Left colon (tissue), 2 donors: ENCODE measurements at regions of chr1 and their contacts with region 1.

Region 1: DNA sequence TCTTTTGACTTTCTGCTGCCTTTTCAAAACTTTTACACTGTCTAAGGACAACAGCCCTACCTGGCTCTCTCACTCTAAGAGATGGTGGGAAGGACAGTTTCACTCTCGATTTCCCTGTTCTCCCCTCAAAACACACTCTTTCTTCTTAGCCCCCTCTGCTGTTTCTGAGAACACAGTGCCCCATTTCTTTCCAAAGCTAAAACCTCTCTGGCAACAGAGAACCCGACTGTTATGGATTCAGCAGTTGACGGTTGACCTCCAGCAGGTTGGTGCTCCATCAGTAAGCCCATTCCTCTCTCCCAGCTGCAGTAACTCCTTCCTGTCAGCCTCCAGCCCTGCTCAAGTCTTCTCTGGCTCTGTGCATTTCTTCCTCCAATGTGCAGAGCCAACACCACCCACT is 88.2 kb upstream of the ABCD3 start:
- DNase-seq: no peak
- ATAC-seq: no peak

Region 2: DNA sequence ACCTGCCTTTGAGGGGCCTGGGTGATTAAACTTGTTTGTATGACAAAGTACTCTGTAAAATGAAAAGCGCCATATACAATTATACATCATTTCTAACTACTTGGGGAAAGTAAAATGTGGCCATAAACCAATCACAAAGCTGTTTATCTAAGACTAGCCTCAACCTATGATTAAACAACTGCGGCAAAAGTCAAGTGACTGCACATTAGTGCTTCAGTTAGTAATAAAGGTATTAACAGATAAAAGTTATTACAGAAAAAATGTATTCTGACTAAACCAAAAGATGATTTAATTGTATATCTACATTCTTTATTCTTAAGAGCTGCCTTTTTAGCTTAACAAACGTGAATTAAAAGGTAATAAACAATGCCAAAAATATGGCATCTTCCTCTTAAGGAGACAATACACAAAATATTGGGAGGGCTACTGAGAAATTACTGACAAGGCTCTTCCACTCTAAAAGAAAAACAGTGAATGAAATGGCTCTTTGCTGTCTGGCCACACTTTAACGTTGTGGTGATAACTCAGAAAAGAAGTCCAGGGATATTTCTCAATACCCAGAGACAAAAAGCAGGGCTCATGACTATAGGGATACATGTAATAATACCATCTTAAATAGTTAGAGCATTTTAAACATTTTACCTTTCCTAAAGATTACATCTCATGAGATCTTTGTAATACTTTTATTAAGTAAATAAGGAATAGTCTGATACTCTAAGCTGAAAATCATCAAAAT is 101.2 kb before region 1 on chr1:
- intact Hi-C with region 1: no loop called
- DNase-seq: no peak
- ATAC-seq: no peak

Region 3: DNA sequence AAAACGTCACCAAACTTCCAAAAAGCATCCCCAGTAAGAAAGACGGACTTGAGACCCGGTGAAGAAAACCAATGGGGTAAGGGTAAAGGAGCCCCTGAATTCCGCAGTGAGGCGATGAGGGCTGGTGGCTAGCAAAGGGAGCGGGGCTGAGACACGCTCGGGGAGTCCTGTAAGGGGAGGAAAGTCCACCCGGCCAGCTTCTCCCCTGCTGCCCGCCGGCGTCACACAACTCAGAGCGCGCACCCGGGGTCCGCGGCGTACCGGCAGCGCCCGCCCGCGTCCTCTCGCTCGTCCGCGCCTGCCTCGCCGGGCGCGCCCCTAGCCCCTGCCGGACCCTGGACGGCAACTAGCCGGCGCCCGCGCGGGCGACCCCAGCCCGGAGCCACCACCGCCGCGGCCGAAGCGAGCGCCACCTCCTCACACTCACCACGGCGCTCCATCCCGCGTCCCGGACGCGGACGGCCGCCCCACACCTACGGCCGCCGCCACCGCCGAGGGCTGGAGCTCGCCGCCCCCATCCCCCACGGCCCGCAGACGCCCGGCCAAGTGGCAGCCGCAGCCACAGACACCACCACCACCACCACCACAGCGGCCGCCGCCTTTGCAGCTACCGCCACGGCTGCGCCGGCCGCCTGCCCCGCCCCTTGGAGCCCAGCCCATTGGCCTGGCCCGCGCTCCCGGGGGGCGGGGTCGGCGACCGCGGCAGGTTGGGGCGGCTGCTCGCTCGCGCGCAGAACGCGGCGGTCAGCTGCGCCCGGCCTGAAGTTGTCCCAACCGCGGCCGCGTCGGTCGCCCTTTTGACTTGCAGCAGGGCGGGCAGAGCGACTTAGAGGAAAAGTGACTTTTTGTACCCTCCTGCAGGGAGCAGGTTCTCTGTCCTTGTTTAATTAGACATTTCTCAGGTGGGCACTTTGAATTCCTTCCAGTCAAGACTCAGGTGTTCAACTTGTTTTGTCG is 82.6 kb before region 1 on chr1:
- intact Hi-C with region 1: loop called in 1 of 2 experiments (anchors 10 kb)
- DNase-seq: peak; percentile 62 to 85
- ATAC-seq: peak; percentile 100

Region 4: DNA sequence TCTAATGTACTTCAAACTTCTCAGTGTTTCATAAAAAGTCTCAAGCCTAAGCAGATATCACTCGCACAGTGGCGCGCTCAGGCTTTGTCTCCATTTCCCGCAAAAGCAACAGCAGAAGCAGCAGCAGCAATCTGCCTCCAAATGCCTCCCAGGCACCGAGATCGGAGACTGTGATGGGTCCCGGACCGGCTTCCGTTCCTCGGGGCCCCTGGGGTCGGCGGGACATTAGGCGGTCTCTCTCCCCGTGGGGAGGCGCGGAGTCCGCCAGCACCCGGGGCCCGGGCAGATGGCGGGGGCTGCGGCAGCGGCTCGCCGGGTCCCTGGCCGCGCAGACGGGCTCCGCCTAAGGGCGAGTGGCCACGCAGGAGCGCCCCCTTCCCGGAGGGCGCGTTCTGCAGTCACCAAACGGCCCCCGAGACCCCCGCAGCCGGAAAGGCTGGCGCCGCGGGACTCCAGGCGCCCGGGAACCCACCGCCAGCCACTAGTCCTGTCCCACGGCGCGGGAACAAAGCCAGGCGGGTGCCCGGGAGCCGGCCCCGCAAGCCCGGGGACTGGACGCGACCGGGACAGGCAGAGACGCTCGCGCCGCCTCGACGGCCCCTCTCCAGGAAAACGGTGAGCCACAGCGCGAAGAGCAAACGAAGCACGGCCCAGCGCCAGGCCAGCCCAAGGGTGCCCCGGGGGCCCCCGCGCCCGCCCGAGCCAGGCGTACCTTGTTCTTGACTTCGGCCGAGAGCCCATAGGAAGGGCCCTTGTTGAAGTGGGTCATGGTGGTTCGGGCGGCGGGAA is 596.3 kb after region 1 on chr1:
- intact Hi-C with region 1: no loop called
- DNase-seq: peak in 1 of 2 donors; percentile 63
- ATAC-seq: peak; percentile 54